ENCODE measurements at regions of chr22 and their contacts with region 1.

Region 1: GRCh38 chr22:20156611-20157429 is 6.0 kb upstream of the CCDC188 start:
- DNase-seq: peak; percentile 76 to 88
- H3K4me3 ChIP-seq: no peak overlapping the region
- H3K27ac ChIP-seq: no peak overlapping the region
- H3K4me1 ChIP-seq: peaks cover 0 to 8% (median 2%) of the 10 kb centered on the region in 4 donors
- H3K27me3 ChIP-seq: peaks cover 0 to 46% of the 10 kb centered on the region in 2 donors
- CTCF ChIP-seq: peak; percentile 98 to 100

Region 2: DNA sequence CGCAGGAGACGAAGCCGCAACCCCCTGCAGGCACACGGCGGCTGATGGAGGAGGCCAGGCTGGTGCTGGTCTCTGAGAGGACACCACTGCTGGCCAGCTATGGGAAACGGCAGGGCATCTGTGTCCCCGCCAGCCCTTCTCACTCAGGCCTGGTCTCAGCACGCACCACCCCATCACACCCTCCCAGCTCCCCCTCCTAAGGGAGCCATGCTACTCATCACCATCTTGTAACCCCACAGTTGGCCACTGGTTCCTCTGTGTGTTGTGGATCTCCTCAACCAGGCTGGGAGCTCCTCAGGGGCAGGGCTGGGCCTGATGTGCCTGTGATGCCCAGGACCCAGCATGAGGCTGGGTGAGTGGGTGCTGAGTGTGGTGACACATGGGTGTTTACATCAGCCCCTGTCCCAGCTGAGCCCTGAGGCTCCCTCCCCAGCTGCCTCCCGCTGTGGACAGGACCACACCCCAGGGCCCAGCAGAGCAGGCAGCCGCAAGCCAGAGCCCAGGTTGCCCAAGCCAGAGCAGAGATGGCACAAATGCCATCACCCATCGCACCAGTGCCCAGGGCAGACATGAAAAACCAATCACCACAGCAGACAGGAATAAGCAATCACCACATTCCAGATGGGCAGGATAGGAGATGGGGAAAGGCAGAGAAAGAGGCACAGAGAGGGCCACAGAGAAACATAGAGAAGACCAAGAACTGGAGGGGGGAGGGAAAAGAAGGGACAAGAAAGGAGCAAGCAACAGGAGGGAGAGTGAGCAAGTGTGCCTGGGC is 148.4 kb before region 1 on chr22:
- intact Hi-C with region 1: no loop called
- DNase-seq: peak in 1 of 2 donors; percentile 47
- H3K4me3 ChIP-seq: no peak overlapping the region
- H3K27ac ChIP-seq: no peak overlapping the region
- H3K4me1 ChIP-seq: peaks cover 0 to 9% (median 8%) of the 10 kb centered on the region in 4 donors
- H3K27me3 ChIP-seq: no peaks in the 10 kb centered on the region
- CTCF ChIP-seq: no peak

Region 3: DNA sequence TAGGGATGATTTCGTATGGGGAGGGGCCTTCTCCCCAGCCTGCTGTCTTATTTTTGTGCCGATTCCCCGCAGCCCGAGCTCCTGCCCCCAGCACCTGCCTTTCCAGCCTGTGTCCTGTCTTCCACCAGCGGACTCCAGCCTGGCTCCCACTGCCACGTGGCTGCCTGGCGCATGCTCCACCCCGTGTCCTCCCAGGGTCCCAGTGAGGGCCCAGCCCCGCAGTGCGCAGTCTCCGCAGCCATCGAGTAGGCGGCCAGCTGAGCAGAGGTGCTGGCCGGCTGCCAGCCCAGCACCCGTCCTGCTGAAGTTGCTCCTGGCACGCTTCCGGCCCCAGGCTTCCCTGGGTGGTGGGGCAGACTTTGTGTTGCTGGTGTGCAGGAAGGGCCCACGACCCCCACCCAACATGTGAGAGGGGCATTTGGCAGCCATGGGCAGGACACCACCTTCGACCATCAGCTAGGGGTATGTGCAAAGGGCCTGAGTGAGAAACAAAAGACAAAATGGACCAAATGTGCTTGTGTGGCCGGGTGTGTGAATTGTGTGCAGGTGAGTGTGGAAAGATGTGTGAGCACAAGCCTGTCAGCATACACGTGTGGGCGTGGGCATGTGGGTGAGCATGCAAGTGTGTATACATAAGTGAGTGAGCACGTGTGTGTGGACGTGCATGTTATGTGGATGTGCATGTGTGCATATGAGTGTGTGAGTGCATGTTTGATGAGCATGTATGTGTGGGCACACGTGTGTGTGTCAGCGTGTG is 55.4 kb after region 1 on chr22:
- intact Hi-C with region 1: no loop called
- DNase-seq: peak in 1 of 2 donors; percentile 84
- H3K4me3 ChIP-seq: no peak overlapping the region
- H3K27ac ChIP-seq: no peak overlapping the region
- H3K4me1 ChIP-seq: peaks cover 4 to 56% (median 35%) of the 10 kb centered on the region in 4 donors
- H3K27me3 ChIP-seq: no peaks in the 10 kb centered on the region
- CTCF ChIP-seq: no peak

Region 4: GRCh38 chr22:20268279-20269012 is 111.6 kb after region 1 on chr22 and contains the start of gene RTN4R:
- intact Hi-C with region 1: loop called (anchors 1 kb)
- DNase-seq: no peak
- H3K4me3 ChIP-seq: peak within 1 kb of the TSS; percentile 39 to 50
- H3K27ac ChIP-seq: no peak within 1 kb of the TSS
- H3K4me1 ChIP-seq: peaks cover 0 to 17% (median 12%) of the 10 kb centered on the region in 4 donors
- H3K27me3 ChIP-seq: peaks cover 0 to 21% of the 10 kb centered on the region in 2 donors
- CTCF ChIP-seq: peak; percentile 66 to 84

Region 5: DNA sequence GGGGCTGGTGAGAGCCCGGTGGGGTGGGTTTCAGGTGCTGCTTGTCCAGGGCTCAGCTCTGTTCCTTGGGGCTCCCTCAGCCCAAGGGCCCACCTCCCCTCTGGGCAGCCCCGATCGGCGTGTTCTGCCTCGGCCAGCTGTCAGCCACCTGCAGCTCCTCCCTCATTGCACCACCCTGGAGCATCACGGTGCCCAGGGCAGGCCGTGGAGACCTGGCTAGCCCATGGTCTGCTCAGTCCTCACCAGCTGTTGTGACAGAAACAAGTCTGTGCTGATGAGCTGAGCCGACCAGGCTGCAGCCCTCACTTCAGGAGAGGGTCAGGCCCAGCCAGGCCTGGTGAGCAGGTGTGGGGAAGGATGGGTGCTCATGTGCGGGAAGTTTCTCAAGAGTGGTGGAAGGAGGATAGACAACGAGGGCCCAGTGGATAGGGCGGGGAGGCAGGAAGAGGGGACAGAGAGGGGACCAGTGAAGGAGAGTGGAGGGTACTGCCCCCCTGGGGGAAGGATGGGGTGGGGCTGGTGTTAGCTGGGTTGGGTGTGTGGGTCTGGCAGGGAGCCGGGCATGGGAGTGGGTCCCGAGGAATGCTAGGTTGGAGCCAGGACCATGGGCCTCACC is 127.8 kb after region 1 on chr22:
- intact Hi-C with region 1: loop called (anchors 1 kb)
- DNase-seq: no peak
- H3K4me3 ChIP-seq: no peak overlapping the region
- H3K27ac ChIP-seq: no peak overlapping the region
- H3K4me1 ChIP-seq: no peaks in the 10 kb centered on the region
- H3K27me3 ChIP-seq: peaks cover 0 to 18% of the 10 kb centered on the region in 2 donors
- CTCF ChIP-seq: no peak

Measured in tibial artery (tissue), 4 donors.